Activated B cell treated with CpG ODN at 0.5 μM for 24 hours (primary cell): ENCODE measurements at regions of chr17 and their contacts with region 1.

Region 1: GRCh38 chr17:45575126-45575885 is 84.8 kb upstream of the PLEKHM1 start:
- DNase-seq: no peak
- ATAC-seq: peak; percentile 90
- H3K4me3 Mint-ChIP-seq: peak overlapping the region; percentile 9
- H3K27ac Mint-ChIP-seq: peak overlapping the region; percentile 31
- H3K4me1 Mint-ChIP-seq: peaks cover 60% of the 10 kb centered on the region
- H3K27me3 Mint-ChIP-seq: no peaks in the 10 kb centered on the region
- CTCF ChIP-seq: no peak

Region 2: GRCh38 chr17:45628019-45628418 is 52.7 kb after region 1 on chr17:
- CTCF ChIA-PET with region 1: no interaction called
- POLR2A ChIA-PET with region 1: no interaction called
- intact Hi-C with region 1: no loop called
- DNase-seq: no peak
- ATAC-seq: no peak
- H3K4me3 Mint-ChIP-seq: no peak overlapping the region
- H3K27ac Mint-ChIP-seq: no peak overlapping the region
- H3K4me1 Mint-ChIP-seq: no peaks in the 10 kb centered on the region
- H3K27me3 Mint-ChIP-seq: no peaks in the 10 kb centered on the region
- CTCF ChIP-seq: no peak

Region 3: GRCh38 chr17:46205975-46206374 is 630.7 kb after region 1 on chr17:
- CTCF ChIA-PET with region 1: no interaction called
- POLR2A ChIA-PET with region 1: interaction called, 12 read pairs
- intact Hi-C with region 1: no loop called
- DNase-seq: no peak
- ATAC-seq: no peak
- H3K4me3 Mint-ChIP-seq: no peak overlapping the region
- H3K27ac Mint-ChIP-seq: no peak overlapping the region
- H3K4me1 Mint-ChIP-seq: peaks cover 11% of the 10 kb centered on the region
- H3K27me3 Mint-ChIP-seq: no peaks in the 10 kb centered on the region
- CTCF ChIP-seq: no peak